Activated CD8-positive, alpha-beta T cell treated with anti-CD3 and anti-CD28 coated beads, Interleukin-2, amount 10 ng/mL, durations not matched to agents 7 days and 5 days (primary cell): ENCODE measurements at regions of chr2 and their contacts with region 1.

Region 1: DNA sequence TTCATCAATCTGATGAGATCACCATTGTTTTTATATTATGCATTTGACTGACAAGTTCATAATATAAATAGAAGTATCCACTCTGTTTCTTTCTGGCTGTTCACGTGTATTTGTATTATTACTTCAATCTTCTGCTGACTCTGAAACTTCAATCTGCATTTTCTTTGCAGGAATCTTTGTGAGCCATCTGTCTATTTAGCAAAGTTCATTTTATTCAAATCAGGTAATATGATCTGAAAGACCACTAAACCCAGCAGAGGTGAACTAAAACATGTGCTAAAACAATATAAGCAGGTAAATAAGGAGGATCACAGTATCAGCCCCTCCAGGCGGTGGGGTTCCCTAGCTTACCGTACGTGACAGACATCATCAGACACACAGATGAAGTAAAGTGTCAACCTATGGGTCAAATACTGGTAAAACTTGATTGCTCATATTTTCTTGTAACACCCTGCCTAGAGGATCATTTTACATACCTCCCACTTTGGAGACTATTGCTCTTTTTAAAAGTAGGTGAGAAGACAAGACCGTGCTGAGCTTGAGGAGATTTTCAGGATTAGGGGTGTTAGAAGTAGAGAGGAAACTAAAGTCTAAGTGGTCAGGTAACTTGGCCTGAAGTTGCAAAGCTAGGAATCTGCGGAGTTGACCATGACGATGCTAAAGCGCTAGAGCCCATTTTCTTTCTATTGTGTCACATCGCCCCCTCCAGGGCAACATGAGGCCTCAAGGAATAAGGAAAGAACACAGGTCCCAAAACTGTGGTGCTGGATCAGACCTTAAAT is 9.0 kb downstream of the DTNB start:
- DNase-seq: peak; percentile 35
- ATAC-seq: no peak
- H3K4me3 Mint-ChIP-seq: no peak overlapping the region
- H3K27ac Mint-ChIP-seq: no peak overlapping the region
- H3K4me1 Mint-ChIP-seq: peaks cover 7% of the 10 kb centered on the region
- H3K27me3 Mint-ChIP-seq: no peaks in the 10 kb centered on the region

Region 2: GRCh38 chr2:25651784-25652455 is 12.5 kb before region 1 on chr2:
- CTCF ChIA-PET with region 1: interaction called, 15 read pairs
- POLR2A ChIA-PET with region 1: no interaction called
- DNase-seq: no peak
- ATAC-seq: no peak
- H3K4me3 Mint-ChIP-seq: no peak overlapping the region
- H3K27ac Mint-ChIP-seq: no peak overlapping the region
- H3K4me1 Mint-ChIP-seq: peaks cover 4% of the 10 kb centered on the region
- H3K27me3 Mint-ChIP-seq: no peaks in the 10 kb centered on the region

Region 3: DNA sequence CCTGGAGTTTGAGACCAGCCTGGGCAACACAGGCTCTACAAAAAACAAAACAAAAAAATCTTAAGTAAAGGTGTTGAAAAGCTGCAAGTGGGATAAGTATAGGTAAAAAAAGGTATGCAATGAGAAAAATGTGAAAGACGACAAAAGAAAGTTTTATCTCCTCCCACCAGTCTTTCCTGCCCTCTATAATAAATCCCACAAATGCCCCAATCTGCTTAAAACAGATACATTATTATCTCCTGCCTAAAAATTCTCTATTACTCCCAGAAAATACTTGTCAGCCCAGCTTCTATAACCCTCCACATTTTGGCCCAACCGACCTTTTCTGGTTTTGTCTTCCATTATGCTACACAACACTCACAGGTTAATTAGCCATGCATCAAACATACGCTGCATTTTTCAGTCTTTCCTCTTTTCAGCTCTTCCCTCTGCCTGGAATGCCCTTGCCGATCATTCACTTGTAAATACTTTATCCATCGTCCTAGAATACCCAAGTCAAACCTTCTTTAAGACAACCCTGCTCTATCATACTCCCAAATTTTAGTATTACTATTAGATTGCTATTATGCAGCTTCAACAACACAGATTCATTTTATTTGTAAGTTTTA is 203.1 kb after region 1 on chr2:
- CTCF ChIA-PET with region 1: no interaction called
- POLR2A ChIA-PET with region 1: no interaction called
- DNase-seq: no peak
- ATAC-seq: no peak
- H3K4me3 Mint-ChIP-seq: no peak overlapping the region
- H3K27ac Mint-ChIP-seq: no peak overlapping the region
- H3K4me1 Mint-ChIP-seq: peaks cover 2% of the 10 kb centered on the region
- H3K27me3 Mint-ChIP-seq: no peaks in the 10 kb centered on the region